ENCODE measurements at regions of chr5 and their contacts with region 1.

Region 1: DNA sequence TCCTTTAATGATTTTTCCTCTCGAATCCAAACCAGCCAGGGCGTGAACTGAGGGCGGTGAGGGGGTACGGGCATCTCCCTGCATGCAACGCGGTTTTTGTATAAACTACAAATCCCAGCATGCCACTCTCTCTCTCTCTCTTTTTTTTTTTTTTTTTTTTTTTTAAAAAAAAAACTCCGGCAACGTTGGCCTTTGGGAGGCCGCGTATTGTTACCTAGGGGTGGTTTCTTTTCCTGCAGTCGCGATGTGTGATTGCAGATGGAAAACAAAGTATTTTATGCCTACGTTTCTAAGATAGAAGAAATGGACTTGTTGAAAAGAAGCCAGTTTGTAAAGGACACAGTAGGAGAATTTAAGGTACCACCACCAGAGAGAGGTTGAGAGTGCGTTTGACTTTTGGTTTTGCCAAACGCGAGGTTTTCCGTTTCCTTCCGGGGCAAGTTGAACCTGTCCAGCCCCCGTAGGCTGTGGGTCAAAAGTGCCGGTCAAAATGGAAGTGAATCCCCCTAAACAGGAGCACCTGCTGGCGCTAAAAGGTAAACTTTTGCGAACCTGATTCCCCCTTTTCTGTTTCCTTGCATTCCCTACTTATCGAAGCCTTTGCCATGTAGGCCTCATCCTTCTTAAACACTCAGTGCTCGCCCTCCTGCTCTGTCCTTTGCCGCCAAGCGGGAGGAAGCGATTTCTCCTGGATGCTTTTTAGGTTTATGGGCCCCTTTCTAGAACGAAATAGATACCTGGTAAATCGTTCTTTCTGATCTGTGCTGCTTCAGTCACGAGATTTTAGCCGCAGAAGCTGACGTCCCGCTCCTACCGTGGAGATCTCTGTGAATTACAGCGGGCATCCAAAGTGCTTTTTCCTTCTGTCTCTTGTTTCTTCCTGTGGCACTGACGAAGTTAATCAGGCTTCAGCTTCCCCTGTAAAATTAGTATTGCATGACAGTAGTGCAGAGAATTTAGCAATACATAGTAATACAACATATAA is at the starts of genes SHLD3 and TRAPPC13:
- DNase-seq: peak; percentile 87 to 90
- H3K4me3 ChIP-seq: peak within 1 kb of the TSS; percentile 85 to 89
- H3K27ac ChIP-seq: peak within 1 kb of the TSS; percentile 88 to 93
- H3K4me1 ChIP-seq: peaks cover 0 to 42% (median 32%) of the 10 kb centered on the region in 4 donors
- H3K27me3 ChIP-seq: no peaks in the 10 kb centered on the region
- CTCF ChIP-seq: peak in 1 of 2 experiments; percentile 25

Region 2: DNA sequence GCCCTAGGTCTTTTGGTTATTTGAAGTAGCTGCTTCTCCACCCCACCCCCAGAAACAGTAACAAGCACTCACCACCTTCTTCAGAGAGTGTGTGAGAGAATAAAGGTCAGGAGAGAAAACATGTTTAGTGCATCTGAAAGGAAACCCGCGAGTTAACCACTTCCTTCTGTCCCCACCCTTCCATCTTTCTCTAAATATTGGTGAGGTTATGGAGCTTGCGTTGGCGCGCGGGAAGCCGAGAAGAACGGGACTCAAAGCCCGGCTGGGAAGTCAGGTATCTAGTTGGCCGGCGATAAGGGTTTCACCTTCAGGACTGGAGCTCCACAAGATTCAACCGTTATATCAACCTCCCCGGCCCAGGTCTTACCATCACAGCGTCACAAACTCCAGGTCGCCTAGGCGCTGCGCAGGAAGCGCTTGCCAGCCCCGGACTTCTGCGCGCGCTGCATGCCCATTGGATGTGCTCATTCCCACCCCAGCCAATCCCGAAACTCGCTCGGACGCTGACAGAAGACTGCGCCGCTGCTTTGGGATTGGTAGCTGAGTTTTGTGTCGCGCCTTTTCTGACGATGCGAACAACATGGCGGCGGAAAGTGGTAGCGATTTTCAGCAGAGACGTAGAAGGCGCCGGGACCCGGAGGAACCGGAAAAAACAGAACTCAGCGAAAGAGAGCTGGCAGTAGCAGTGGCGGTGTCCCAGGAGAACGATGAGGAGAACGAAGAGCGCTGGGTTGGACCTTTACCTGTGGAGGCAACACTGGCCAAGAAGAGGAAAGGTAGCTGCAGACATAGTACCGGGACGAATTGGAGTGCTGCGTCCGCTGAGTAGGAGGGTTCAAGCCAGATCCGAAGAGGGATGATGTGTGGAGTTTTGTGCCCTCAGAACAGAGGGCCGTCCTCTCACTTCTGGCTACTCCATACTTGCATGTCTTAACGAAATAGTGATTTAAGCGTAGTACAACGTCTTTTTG is 61.8 kb before region 1 on chr5 and contains the starts of genes CENPK and PPWD1:
- intact Hi-C with region 1: loop called (anchors 5 kb)
- DNase-seq: peak; percentile 95
- H3K4me3 ChIP-seq: peak within 1 kb of the TSS; percentile 66 to 85
- H3K27ac ChIP-seq: peak within 1 kb of the TSS; percentile 81 to 85
- H3K4me1 ChIP-seq: peaks cover 0 to 29% (median 21%) of the 10 kb centered on the region in 4 donors
- H3K27me3 ChIP-seq: no peaks in the 10 kb centered on the region
- CTCF ChIP-seq: peak in 1 of 2 experiments; percentile 24

Region 3: DNA sequence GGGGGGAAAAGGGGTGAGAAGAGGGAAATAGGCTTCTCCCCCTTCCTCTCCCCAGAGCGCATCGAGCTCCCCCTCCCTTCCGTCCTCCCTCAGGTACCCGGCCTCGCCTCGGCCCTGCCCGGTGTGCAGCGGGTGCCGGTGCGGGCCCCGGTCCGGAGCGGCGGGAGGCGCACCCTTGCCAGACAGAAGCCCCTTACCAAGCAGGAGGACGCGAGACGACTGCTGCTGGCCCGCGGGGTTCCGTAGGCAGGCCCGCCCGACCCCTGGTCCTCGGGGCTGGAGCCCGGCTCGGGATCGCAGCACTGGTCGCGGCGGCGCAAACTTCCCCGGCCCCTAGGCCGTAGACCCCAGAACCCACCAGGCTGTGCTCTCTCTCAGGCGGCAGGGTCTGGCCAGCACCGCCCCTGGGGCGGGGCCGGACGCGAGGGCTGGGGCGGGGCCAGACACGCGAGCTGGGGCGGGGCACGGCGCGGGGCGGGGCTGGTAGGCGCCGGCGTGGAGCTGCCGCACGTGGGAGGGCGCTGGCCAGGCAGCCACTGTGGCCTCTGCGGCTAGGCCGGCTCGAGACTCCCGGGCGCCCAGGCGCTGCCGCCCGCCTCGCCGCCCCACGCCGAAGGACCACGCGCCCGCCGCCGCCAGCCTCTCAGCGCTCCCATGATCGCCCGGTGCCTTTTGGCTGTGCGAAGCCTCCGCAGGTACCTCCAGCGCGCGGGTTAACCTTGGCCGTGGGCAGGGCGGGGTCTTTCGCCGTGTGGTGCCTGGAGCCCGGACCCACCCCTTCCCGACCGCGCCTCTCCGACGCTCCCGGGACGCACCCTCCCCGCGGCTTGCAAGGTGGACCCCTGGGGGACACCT is 97.1 kb after region 1 on chr5 and contains the starts of genes NLN and SGTB:
- intact Hi-C with region 1: loop called (anchors 10 kb)
- DNase-seq: peak; percentile 72 to 91
- H3K4me3 ChIP-seq: peak within 1 kb of the TSS; percentile 73 to 92
- H3K27ac ChIP-seq: peak within 1 kb of the TSS; percentile 76 to 82
- H3K4me1 ChIP-seq: peaks cover 0 to 37% (median 7%) of the 10 kb centered on the region in 4 donors
- H3K27me3 ChIP-seq: no peaks in the 10 kb centered on the region
- CTCF ChIP-seq: no peak

Region 4: DNA sequence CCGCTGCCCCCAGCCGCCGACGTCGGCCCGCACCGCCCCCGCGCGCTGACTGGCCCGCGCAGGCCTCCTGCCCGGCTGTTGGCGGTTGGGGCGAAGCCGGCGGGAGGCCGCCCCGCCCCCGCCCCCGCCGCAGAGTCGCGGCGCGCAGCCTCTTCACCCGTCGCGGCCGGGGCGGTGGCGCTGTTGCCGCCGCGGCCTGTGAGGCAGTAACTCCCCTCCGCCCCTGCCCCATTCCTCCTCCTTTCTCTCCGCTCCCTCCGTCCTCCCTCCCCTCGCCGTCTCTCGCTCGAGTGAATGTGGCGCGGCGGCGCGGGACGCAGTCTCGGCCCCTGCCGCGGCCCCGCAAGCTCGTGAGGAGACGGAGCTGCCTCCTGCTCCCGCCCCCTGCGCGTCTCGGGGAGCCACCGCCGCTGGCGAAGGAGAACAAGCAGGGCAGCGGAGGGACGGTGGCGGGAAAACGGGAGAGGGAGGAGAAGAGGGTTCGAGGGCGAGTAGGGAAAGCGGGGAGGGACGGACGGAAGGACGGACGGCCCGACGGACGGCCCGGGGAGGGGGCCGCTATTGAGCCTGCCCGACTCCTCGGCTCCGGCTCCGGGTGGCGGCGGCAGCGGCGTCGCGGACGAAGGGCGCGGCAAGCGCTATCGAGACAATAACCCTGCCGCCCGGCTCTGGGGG is 300.9 kb after region 1 on chr5:
- intact Hi-C with region 1: loop called (anchors 10 kb)
- DNase-seq: peak; percentile 68 to 91
- H3K4me3 ChIP-seq: peak overlapping the region; percentile 96 to 97
- H3K27ac ChIP-seq: peak overlapping the region; percentile 100
- H3K4me1 ChIP-seq: peaks cover 0 to 17% (median 4%) of the 10 kb centered on the region in 4 donors
- H3K27me3 ChIP-seq: no peaks in the 10 kb centered on the region
- CTCF ChIP-seq: peak; percentile 33 to 35

Region 5: DNA sequence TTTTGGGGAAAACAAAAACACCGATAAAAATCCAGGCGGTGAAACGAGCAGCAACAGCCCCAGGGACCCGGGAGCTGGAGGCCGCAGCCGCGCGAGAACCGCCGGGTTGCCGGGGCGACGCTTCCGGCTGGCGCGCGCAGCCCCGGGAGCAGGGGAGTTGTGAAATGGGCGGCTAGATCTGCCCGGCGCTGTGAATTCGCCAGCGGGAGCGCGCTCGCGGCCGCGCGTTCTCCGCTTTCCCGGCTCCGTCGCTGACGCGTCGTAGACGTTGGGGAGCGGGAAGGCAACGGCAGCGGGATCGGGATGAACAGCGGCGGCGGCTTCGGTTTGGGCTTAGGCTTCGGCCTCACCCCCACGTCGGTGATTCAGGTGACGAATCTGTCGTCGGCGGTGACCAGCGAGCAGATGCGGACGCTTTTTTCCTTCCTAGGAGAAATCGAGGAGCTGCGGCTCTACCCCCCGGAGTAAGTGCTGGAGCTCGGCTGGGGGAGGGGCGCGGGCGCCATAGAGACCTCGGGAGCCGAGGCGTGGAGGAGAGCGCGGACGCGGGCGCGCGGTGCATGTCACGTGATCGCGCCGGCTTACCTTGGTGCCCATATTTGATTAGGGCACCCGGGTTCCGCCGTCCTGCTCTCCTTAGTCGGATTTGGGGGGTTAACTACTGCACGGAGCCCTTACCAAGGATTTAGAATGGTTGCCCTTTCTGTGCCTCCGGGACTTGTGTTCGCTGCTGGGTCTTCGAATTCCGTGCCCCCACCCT is 519.4 kb after region 1 on chr5 and contains the start of gene SREK1:
- intact Hi-C with region 1: loop called (anchors 10 kb)
- DNase-seq: peak; percentile 92 to 95
- H3K4me3 ChIP-seq: peak within 1 kb of the TSS; percentile 77 to 90
- H3K27ac ChIP-seq: peak within 1 kb of the TSS; percentile 97 to 98
- H3K4me1 ChIP-seq: peaks cover 0 to 39% (median 22%) of the 10 kb centered on the region in 4 donors
- H3K27me3 ChIP-seq: no peaks in the 10 kb centered on the region
- CTCF ChIP-seq: peak in 1 of 2 experiments; percentile 15

Measured in tibial artery (tissue), 4 donors.